ENCODE measurements at regions of chr7 and their contacts with region 1.

Region 1: GRCh38 chr7:6729492-6730342 is 23.0 kb upstream of the ZNF12 start:
- DNase-seq: peak; percentile 57 to 91 (median 76)
- ATAC-seq: peak; percentile 95
- H3K4me3 ChIP-seq: peak overlapping the region; percentile 90
- H3K4me3 Mint-ChIP-seq: peak overlapping the region; percentile 88
- H3K27ac ChIP-seq: peak overlapping the region; percentile 72 to 75
- H3K27ac Mint-ChIP-seq: peak overlapping the region; percentile 83
- H3K4me1 ChIP-seq: peaks cover 22% of the 10 kb centered on the region
- H3K4me1 Mint-ChIP-seq: peaks cover 21% of the 10 kb centered on the region
- H3K27me3 ChIP-seq: no peaks in the 10 kb centered on the region
- H3K27me3 Mint-ChIP-seq: no peaks in the 10 kb centered on the region
- CTCF ChIP-seq: no peak

Region 2: DNA sequence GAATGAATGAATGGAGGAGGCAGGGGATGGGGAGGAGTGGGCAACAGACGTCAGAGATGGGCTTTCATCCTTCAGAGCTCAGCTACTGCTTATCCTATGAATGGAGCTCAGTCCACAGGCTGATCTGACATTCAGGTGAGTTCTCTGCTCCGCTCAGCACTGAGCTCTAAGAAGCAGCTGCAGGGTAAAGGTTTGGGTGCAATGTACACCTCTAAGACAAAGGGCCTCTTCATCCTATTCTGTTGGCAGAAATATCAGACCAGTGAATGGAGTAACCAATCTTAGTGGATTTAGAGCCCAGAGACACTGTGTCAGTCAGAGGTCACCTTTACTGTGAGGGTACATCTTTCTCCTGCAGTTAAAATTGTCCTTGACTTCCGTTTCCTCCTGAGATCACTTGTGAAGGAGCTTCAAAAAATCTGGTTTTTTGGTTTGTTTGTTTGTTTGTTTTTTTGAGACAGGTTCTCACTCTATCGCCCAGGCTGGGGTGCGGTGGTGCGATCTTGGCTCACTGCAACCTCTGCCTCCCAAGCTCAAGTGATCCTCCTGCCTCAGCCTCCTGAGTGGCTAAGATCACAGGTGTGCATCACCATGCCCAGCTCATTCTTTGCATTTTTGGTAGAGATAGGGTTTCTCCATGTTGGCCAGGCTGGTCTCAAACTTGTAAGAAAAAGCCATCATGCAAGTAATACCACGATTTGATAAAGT is 101.5 kb after region 1 on chr7:
- CTCF ChIA-PET with region 1: no interaction called
- POLR2A ChIA-PET with region 1: no interaction called
- intact Hi-C with region 1: loop called in 1 of 2 experiments (anchors 5 kb)
- DNase-seq: no peak
- ATAC-seq: no peak
- H3K4me3 ChIP-seq: no peak overlapping the region
- H3K4me3 Mint-ChIP-seq: no peak overlapping the region
- H3K27ac ChIP-seq: no peak overlapping the region
- H3K27ac Mint-ChIP-seq: no peak overlapping the region
- H3K4me1 ChIP-seq: peaks cover 4% of the 10 kb centered on the region
- H3K4me1 Mint-ChIP-seq: no peaks in the 10 kb centered on the region
- H3K27me3 ChIP-seq: no peaks in the 10 kb centered on the region
- H3K27me3 Mint-ChIP-seq: peaks cover 29% of the 10 kb centered on the region
- CTCF ChIP-seq: no peak